ENCODE measurements at regions of chr1 and their contacts with region 1.

Region 1: GRCh38 chr1:160768295-160768657 is 27.7 kb upstream of the LY9 start:
- DNase-seq: peak; percentile 94
- ATAC-seq: peak; percentile 80
- H3K4me3 Mint-ChIP-seq: peak overlapping the region; percentile 78
- H3K27ac Mint-ChIP-seq: peak overlapping the region; percentile 92
- H3K4me1 Mint-ChIP-seq: peaks cover 51% of the 10 kb centered on the region
- H3K27me3 Mint-ChIP-seq: no peaks in the 10 kb centered on the region
- CTCF ChIP-seq: peak; percentile 89

Region 2: DNA sequence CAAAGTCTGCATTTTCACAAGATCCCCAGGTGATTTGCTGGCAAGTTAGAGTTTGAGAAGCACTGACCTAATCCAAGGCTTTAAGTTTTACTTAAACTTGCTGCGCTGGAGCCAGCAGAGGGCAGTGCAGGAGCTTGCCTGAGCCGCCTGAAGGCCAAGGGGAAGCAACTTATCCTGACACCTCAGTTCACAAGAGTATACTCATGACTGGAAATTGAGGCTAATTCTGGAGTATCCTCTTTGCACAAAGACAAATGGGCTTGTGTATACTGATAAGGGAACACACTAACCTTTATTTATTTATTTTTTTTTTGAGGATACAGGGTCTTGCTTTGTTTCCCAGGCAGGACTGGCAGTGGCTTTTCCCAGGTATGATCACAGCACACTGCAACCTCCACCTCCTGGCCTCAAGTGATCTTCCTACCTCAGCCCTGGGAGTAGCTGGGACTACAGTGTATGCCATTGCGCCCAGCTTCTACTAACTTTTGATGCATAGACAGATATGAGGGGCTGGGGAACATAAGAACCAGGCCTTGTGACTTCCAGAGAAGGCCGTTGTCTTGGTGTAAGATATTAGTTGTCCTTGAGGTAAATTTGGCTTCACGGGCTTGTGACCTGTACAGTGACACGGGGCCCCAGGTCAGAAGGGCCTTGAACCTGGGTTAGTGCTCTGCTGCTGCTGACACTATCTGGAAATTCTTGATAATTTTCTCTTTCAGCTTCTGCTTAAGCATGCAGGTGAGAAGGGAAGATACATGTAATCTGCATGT is 92.5 kb before region 1 on chr1:
- CTCF ChIA-PET with region 1: interaction called, 42 read pairs
- POLR2A ChIA-PET with region 1: interaction called, 4 read pairs
- intact Hi-C with region 1: no loop called
- DNase-seq: peak; percentile 88
- ATAC-seq: peak; percentile 85
- H3K4me3 Mint-ChIP-seq: no peak overlapping the region
- H3K27ac Mint-ChIP-seq: peak overlapping the region; percentile 73
- H3K4me1 Mint-ChIP-seq: peaks cover 30% of the 10 kb centered on the region
- H3K27me3 Mint-ChIP-seq: no peaks in the 10 kb centered on the region
- CTCF ChIP-seq: peak; percentile 73

Region 3: DNA sequence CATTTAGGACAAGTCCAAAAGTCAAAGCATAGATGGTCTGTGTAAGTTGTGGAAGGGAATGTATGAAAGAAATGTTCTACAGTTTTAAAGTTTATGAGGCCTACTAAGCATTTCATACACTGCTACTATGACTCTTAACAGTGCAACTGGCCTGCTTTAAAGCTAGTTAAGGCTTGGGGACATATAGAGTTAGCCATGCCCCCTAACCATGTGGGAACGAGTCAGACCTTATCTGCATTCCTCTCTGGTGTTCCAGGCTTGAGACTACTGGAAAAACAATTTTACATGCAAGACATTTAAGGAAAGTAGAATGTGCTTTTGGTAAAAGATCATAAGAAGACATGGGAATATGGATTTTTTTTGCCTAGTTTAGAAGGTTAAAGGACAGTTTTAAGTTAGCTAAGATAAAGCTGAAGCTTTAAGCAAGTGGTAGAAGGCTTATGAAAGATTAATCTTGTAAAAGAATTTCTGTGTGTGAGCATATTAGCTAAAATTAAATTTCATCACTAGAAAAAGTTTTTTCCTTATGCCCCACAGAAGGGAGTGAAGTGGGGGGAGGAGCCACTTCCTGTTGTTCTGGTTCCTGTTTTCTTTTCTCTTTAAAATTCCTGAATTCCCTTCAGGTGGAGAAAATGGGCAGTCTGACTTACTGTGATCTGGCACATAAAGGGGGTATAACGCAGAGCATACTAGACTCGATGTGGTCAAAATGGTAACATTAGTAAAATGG is 47.8 kb before region 1 on chr1:
- CTCF ChIA-PET with region 1: interaction called, 217 read pairs
- POLR2A ChIA-PET with region 1: interaction called, 5 read pairs
- intact Hi-C with region 1: no loop called
- DNase-seq: no peak
- ATAC-seq: no peak
- H3K4me3 Mint-ChIP-seq: no peak overlapping the region
- H3K27ac Mint-ChIP-seq: no peak overlapping the region
- H3K4me1 Mint-ChIP-seq: peaks cover 65% of the 10 kb centered on the region
- H3K27me3 Mint-ChIP-seq: no peaks in the 10 kb centered on the region
- CTCF ChIP-seq: no peak

Region 4: GRCh38 chr1:160739098-160739511 is 29.2 kb before region 1 on chr1 and contains the start of gene SLAMF7:
- CTCF ChIA-PET with region 1: interaction called, 88 read pairs
- POLR2A ChIA-PET with region 1: interaction called, 11 read pairs
- intact Hi-C with region 1: no loop called
- DNase-seq: peak; percentile 82
- ATAC-seq: peak; percentile 75
- H3K4me3 Mint-ChIP-seq: peak within 1 kb of the TSS; percentile 84
- H3K27ac Mint-ChIP-seq: peak within 1 kb of the TSS; percentile 94
- H3K4me1 Mint-ChIP-seq: peaks cover 75% of the 10 kb centered on the region
- H3K27me3 Mint-ChIP-seq: no peaks in the 10 kb centered on the region
- CTCF ChIP-seq: no peak
- total RNA-seq, gene SLAMF7: 90.0 to 93.5 TPM

Region 5: GRCh38 chr1:160795951-160796383 is 27.7 kb after region 1 on chr1 and contains the start of gene LY9:
- CTCF ChIA-PET with region 1: interaction called, 186 read pairs
- POLR2A ChIA-PET with region 1: interaction called, 7 read pairs
- intact Hi-C with region 1: no loop called
- DNase-seq: peak; percentile 93
- ATAC-seq: peak; percentile 77
- H3K4me3 Mint-ChIP-seq: peak within 1 kb of the TSS; percentile 87
- H3K27ac Mint-ChIP-seq: peak within 1 kb of the TSS; percentile 95
- H3K4me1 Mint-ChIP-seq: peaks cover 49% of the 10 kb centered on the region
- H3K27me3 Mint-ChIP-seq: no peaks in the 10 kb centered on the region
- CTCF ChIP-seq: no peak
- total RNA-seq, gene LY9: 19.1 to 19.5 TPM

Region 6: DNA sequence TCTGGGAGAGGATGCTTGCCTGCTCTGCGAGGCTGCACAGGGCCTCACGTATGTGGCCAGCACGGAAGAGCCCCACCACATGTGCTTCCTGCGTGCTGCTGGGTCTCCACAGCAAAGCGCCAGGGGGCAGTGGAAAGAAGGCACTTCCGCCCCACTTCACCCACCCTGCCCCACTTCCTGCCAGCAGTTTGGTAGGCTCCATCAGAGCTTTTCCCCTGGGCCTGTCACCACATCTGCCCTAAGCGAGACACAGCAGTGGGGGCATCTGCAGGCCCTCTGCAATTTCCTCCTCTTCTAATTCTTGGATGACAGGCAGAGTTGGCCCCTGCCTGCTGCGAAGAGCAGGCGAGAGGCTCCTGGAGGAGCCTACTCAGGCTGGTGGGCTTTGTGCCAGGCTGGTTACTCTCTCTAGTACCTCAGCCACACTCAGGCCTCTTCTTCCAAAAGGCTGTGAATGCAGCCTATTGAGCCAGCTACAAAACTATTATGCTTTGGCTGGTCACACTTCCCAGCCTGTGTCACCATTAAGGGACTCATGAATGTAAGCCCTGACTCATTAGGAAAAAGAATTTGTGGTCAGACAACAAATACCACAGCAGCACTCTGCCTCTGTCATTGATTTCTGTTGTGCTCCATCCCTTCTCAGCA is 69.4 kb after region 1 on chr1:
- CTCF ChIA-PET with region 1: interaction called, 48 read pairs
- POLR2A ChIA-PET with region 1: interaction called, 4 read pairs
- intact Hi-C with region 1: no loop called
- DNase-seq: peak; percentile 92
- ATAC-seq: peak; percentile 90
- H3K4me3 Mint-ChIP-seq: peak overlapping the region; percentile 57
- H3K27ac Mint-ChIP-seq: peak overlapping the region; percentile 99
- H3K4me1 Mint-ChIP-seq: peaks cover 72% of the 10 kb centered on the region
- H3K27me3 Mint-ChIP-seq: no peaks in the 10 kb centered on the region
- CTCF ChIP-seq: peak; percentile 44